ENCODE measurements at regions of chr1 and their contacts with region 1.

Region 1: GRCh38 chr1:62082456-62083363 is 111.9 kb upstream of the L1TD1 start:
- DNase-seq: peak; percentile 35 to 49
- H3K4me3 ChIP-seq: no peak overlapping the region
- H3K4me3 Mint-ChIP-seq: no peak overlapping the region
- H3K27ac Mint-ChIP-seq: no peak overlapping the region
- H3K4me1 ChIP-seq: peaks cover 9% of the 10 kb centered on the region; the same call in 1 of the 2 replicates
- H3K4me1 Mint-ChIP-seq: no peaks in the 10 kb centered on the region
- H3K27me3 ChIP-seq: no peaks in the 10 kb centered on the region
- H3K27me3 Mint-ChIP-seq: no peaks in the 10 kb centered on the region
- CTCF ChIP-seq: peak; percentile 77 to 78

Region 2: DNA sequence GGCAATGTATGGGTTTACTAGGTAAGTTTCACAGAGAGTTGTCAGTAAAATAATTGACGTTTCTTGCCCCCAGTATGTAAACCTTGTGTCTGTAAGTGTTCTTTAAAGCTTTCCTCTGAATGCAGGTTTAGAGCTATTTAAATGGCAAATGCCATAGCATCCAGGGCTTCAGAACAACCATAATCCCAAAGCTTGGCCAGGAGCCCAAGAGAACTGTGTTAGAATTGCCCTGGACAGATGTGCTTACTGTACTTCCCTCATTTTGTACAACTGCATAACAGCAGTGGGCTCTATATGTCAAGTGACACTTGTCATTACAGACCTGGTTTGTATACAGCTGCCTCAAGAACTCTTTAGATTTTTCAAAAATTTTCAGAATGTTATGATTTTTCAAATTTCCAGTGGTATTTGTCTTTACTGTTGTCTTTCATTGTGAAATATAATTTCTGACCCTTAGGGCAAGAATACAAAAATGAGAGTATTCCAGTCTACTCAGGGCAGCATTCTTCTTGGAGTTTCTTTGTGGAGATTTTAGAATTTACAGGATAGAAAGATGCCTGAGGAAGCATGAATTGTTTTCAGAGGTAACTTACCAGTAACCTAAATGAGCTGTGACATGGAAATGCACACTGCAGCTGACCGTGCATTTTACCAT is 24.9 kb before region 1 on chr1:
- CTCF ChIA-PET with region 1: no interaction called
- POLR2A ChIA-PET with region 1: no interaction called
- intact Hi-C with region 1: no loop called
- DNase-seq: no peak
- H3K4me3 ChIP-seq: no peak overlapping the region
- H3K4me3 Mint-ChIP-seq: no peak overlapping the region
- H3K27ac Mint-ChIP-seq: no peak overlapping the region
- H3K4me1 ChIP-seq: no peaks in the 10 kb centered on the region
- H3K4me1 Mint-ChIP-seq: no peaks in the 10 kb centered on the region
- H3K27me3 ChIP-seq: no peaks in the 10 kb centered on the region
- H3K27me3 Mint-ChIP-seq: no peaks in the 10 kb centered on the region
- CTCF ChIP-seq: no peak

Region 3: DNA sequence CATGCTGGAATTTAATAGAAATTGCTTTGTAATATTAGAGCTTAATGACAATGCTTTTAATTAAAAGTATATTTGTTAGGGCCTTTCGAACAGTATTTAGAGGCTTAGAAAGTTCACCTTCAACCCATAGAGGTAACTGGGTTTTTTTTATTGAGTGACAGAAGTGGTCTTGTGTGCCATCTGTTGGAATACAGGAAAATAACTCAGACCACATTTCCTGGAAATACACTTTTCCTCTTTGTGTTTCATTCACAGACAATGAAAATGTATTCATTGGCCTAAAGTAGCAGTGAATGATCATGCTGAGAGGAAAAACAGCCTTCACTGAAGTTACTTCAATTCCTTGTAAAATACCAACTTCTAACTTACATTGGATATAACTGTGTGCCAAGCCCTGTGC is 28.4 kb after region 1 on chr1:
- CTCF ChIA-PET with region 1: no interaction called
- POLR2A ChIA-PET with region 1: interaction called, 4 read pairs
- intact Hi-C with region 1: loop called (anchors 2 kb)
- DNase-seq: no peak
- H3K4me3 ChIP-seq: no peak overlapping the region
- H3K4me3 Mint-ChIP-seq: no peak overlapping the region
- H3K27ac Mint-ChIP-seq: no peak overlapping the region
- H3K4me1 ChIP-seq: no peaks in the 10 kb centered on the region
- H3K4me1 Mint-ChIP-seq: no peaks in the 10 kb centered on the region
- H3K27me3 ChIP-seq: no peaks in the 10 kb centered on the region
- H3K27me3 Mint-ChIP-seq: no peaks in the 10 kb centered on the region
- CTCF ChIP-seq: no peak

Region 4: GRCh38 chr1:62131093-62131725 is 48.5 kb after region 1 on chr1:
- CTCF ChIA-PET with region 1: interaction called, 6 read pairs
- POLR2A ChIA-PET with region 1: no interaction called
- intact Hi-C with region 1: loop called (anchors 1 kb)
- DNase-seq: peak; percentile 51 to 56
- H3K4me3 ChIP-seq: no peak overlapping the region
- H3K4me3 Mint-ChIP-seq: no peak overlapping the region
- H3K27ac Mint-ChIP-seq: no peak overlapping the region
- H3K4me1 ChIP-seq: no peaks in the 10 kb centered on the region
- H3K4me1 Mint-ChIP-seq: no peaks in the 10 kb centered on the region
- H3K27me3 ChIP-seq: no peaks in the 10 kb centered on the region
- H3K27me3 Mint-ChIP-seq: no peaks in the 10 kb centered on the region
- CTCF ChIP-seq: peak; percentile 60 to 78